Left colon (tissue), 2 donors: ENCODE measurements at regions of chr6 and their contacts with region 1.

Region 1: GRCh38 chr6:145633981-145634627 is 101.2 kb downstream of the EPM2A start:
- DNase-seq: peak; percentile 62 to 90
- ATAC-seq: peak; percentile 89

Region 2: GRCh38 chr6:145225500-145225899 is 408.6 kb before region 1 on chr6:
- intact Hi-C with region 1: loop called in 1 of 2 experiments (anchors 10 kb)
- DNase-seq: no peak
- ATAC-seq: no peak

Region 3: DNA sequence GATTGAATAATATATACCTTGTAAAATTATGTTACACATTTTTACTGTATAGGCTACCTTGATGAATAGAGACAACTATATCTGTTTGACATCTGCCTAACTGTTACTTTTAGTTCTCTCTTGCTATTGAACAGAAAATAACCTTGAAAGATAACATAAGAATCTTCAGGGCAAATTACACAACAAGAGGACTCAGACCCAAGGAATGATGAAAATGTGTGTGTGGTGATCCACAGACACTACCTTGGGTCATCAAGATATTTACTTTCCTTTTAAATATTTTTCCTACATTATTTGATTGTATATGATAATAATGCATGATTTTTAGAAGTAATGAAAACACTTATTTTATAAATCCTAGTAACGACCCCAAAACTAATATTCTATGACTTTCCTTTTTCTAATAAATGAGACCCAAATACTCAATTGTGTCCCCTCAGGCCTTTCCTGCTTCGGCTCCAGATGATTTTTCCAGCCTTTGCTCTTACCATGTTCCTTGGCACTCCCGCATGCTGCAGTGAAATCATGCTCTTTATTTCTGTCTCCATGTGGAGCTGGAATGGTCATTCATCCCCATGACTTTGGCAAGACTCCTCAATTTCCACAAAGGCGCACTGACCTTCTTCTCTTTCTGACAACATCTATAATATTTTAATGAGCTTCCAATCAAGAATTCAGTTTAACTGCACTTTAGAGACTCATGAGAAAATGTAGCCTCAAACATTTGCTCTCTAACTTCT is 86.3 kb before region 1 on chr6:
- intact Hi-C with region 1: no loop called
- DNase-seq: no peak
- ATAC-seq: no peak

Region 4: DNA sequence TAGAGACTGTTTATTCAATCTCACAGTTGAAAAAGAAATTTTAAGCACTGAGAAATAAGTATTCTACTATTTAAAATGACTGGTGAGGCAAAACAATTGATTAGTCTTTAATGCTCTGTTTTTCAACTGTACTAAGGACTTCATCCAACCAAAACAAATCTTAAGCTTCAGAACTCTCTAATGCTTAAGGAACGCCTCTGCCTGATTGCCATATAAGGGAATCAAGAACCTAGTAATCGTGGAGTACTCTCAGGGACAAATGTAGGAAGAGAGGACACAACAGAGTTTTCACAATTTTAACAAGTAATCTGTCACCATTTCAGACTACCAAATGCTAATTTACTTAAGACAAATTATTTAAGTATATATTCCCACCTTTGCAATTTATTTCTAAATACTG is 164.4 kb after region 1 on chr6:
- intact Hi-C with region 1: no loop called
- DNase-seq: no peak
- ATAC-seq: no peak